Left ventricle myocardium inferior (tissue), 1 donor: ENCODE measurements at regions of chr1 and their contacts with region 1.

Region 1: DNA sequence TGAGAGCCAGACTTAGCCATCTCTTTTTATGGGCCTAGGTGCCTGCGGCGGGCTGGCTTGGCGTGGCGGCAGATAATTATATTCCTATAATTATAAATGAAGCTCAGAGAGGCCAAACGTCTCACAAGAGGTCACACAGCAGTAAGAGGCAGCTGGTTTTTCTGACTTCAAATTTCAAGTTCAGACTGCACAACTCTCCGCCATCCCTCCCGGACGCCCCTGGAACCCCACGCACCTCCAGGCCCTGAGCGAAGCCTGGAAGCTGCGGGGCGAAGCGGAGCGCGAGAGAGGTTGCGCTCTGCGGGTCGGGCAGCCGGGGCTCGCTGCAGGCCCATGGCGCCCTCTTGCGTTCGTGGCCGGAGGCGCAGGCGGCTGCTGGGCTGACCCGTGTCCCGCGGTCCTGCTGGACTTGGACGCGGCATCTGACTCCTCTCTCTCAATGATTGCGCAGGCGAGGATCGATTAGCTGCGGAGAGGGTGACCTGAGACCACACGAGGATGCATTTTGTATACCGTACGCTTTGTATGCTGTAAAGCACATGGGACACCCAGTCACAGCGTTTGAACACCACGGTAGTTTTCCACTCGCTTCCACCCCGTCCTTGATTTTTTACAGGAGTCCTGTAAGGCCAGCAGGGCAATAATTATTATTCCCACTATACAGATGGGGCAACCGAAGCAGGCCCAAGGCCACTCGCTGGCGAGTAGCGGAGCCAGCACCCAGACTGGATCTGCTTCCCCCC is 272.7 kb downstream of the FOXD2 start:
- DNase-seq: peak; percentile 74
- H3K4me3 ChIP-seq: peak overlapping the region; percentile 64
- H3K27ac ChIP-seq: no peak overlapping the region
- H3K4me1 ChIP-seq: peaks cover 30% of the 10 kb centered on the region
- H3K27me3 ChIP-seq: peaks cover 100% of the 10 kb centered on the region
- CTCF ChIP-seq: peak; percentile 100

Region 2: GRCh38 chr1:47437447-47438164 is 272.9 kb before region 1 on chr1 and contains the start of gene FOXD2:
- intact Hi-C with region 1: loop called (anchors 10 kb)
- DNase-seq: peak; percentile 83
- H3K4me3 ChIP-seq: peak within 1 kb of the TSS; percentile 80
- H3K27ac ChIP-seq: peak within 1 kb of the TSS; percentile 82
- H3K4me1 ChIP-seq: peaks cover 55% of the 10 kb centered on the region
- H3K27me3 ChIP-seq: peaks cover 99% of the 10 kb centered on the region
- CTCF ChIP-seq: peak; percentile 98
- total RNA-seq, gene FOXD2: not detected

Region 3: DNA sequence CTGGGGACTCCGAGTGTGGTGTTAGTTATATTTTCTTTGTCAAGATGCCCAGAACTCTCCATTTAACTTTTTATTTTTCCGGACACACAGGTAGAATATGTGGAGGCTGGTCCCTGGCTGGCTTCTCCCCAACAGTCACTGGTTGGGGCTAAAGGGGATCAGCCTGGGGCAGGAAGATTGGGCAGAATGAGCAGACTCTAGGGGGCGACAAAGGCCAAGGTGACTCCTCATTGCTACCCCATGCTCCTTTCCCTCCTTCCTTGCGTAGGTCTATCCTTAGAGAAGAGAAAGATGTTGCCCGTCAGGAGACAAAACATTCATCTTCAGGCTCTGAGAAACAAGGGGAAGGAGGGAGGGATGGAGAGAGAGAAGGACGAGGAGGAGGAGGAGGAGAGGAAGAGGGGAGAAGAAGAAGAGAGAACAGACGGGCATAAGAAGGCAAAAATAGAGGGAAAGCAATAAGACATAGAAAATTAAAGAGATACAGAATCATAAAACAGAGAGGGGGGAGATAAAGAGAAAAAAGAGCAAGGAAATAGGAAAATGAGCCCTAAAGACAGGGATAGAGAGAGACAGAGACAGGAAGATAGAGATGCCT is 182.7 kb before region 1 on chr1:
- intact Hi-C with region 1: loop called (anchors 5 kb)
- DNase-seq: no peak
- H3K4me3 ChIP-seq: no peak overlapping the region
- H3K27ac ChIP-seq: no peak overlapping the region
- H3K4me1 ChIP-seq: peaks cover 5% of the 10 kb centered on the region
- H3K27me3 ChIP-seq: peaks cover 61% of the 10 kb centered on the region
- CTCF ChIP-seq: peak; percentile 60